ENCODE measurements at regions of chr5 and their contacts with region 1.

Region 1: DNA sequence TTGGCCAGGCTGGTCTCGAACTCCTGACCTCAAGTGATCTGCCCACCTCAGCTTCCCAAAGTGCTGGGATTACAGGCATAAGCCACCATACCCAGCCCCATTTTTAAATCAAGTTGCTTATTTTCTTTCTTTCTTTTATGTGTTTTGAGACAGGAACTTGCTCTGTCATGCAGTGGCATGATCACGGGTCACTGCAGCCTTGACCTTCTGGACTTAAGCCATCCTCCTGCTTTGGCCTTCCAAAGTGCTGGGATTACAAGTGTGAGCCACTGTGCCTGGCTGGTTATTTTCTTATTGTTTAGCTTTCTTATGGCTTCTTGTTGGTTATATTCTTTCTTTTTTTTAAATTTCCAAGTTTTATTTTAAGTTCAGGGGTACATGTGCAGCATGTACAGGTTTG is 79.7 kb upstream of the C5orf63 start:
- DNase-seq: no peak
- H3K4me3 ChIP-seq: no peak overlapping the region
- H3K27ac ChIP-seq: no peak overlapping the region
- H3K4me1 ChIP-seq: no peaks in the 10 kb centered on the region
- H3K27me3 ChIP-seq: no peaks in the 10 kb centered on the region
- CTCF ChIP-seq: no peak
- POLR2A ChIP-seq: no peak

Region 2: GRCh38 chr5:126857472-126858410 is 295.3 kb before region 1 on chr5:
- intact Hi-C with region 1: no loop called
- DNase-seq: peak in 1 of 2 donors; percentile 32
- H3K4me3 ChIP-seq: no peak overlapping the region
- H3K27ac ChIP-seq: peak overlapping the region in 1 of 2 donors; percentile 43
- H3K4me1 ChIP-seq: no peaks in the 10 kb centered on the region
- H3K27me3 ChIP-seq: no peaks in the 10 kb centered on the region
- CTCF ChIP-seq: no peak
- POLR2A ChIP-seq: no peak

Region 3: GRCh38 chr5:127011961-127012644 is 140.9 kb before region 1 on chr5:
- intact Hi-C with region 1: no loop called
- DNase-seq: no peak
- H3K4me3 ChIP-seq: no peak overlapping the region
- H3K27ac ChIP-seq: no peak overlapping the region
- H3K4me1 ChIP-seq: no peaks in the 10 kb centered on the region
- H3K27me3 ChIP-seq: no peaks in the 10 kb centered on the region
- CTCF ChIP-seq: no peak
- POLR2A ChIP-seq: no peak

Region 4: DNA sequence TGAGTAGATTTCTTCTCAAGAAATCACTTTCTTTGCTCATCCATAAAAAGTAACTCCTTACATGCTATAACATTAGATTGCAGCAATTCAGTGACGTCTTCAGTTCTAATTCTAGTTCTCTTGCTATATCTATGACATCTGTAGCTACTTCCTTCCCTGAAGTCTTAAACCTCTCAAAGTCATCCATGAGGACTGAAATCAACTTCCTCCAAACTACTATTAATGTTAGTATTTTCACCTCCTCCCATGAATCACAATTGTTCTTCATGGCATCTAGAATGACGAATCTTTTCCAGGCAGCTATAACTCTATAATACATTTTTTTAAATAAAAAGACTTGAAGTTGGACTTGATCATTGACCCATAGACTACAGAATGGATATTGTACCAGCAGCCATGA is 318.2 kb after region 1 on chr5:
- intact Hi-C with region 1: no loop called
- DNase-seq: no peak
- H3K4me3 ChIP-seq: no peak overlapping the region
- H3K27ac ChIP-seq: no peak overlapping the region
- H3K4me1 ChIP-seq: no peaks in the 10 kb centered on the region
- H3K27me3 ChIP-seq: no peaks in the 10 kb centered on the region
- CTCF ChIP-seq: no peak
- POLR2A ChIP-seq: no peak

Region 5: GRCh38 chr5:128596071-128596470 is 1443.0 kb after region 1 on chr5:
- intact Hi-C with region 1: loop called (anchors 5 kb)
- DNase-seq: no peak
- H3K4me3 ChIP-seq: no peak overlapping the region
- H3K27ac ChIP-seq: no peak overlapping the region
- H3K4me1 ChIP-seq: no peaks in the 10 kb centered on the region
- H3K27me3 ChIP-seq: no peaks in the 10 kb centered on the region
- CTCF ChIP-seq: no peak
- POLR2A ChIP-seq: no peak